Gastrocnemius medialis (tissue), 4 donors: ENCODE measurements at regions of chr6 and their contacts with region 1.

Region 1: GRCh38 chr6:35688581-35689322 is at the start of gene FKBP5:
- DNase-seq: peak; percentile 98
- ATAC-seq: peak; percentile 54 to 57
- H3K4me3 ChIP-seq: peak within 1 kb of the TSS; percentile 79 to 88 (median 84)
- H3K27ac ChIP-seq: peak within 1 kb of the TSS; percentile 96 to 98 (median 97)
- H3K4me1 ChIP-seq: peaks cover 38 to 41% of the 10 kb centered on the region in 2 donors
- H3K27me3 ChIP-seq: no peaks in the 10 kb centered on the region
- CTCF ChIP-seq: peak in 1 of 5 experiments; percentile 21
- POLR2A ChIP-seq: peak; percentile 100
- total RNA-seq, gene FKBP5: 665 to 1,753 (median 1,205) TPM

Region 2: DNA sequence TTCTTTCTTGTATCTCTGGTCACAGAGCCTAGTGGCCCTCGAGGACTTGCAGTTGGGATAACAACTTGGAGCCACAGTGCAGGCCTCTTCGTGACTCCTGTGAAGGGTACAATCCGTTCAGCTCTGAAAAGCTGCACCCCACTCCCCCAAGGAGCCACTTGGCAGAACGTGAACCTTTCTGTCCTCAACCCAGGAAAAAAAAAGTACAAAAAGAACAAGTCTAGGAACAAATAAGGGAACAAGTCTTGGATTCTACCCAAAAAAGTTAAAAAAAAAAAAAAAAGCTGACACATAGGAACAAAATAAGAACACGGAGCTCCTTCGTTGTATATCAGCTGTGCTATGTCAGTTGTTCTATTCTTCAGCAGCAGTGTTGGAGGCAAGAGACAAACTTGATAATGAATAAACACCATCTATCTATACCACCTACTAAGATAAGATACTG is 98.1 kb before region 1 on chr6:
- in situ Hi-C with region 1: no loop called
- intact Hi-C with region 1: loop called (anchors 1 kb)
- DNase-seq: peak; percentile 80 to 85
- ATAC-seq: peak; percentile 63 to 70
- H3K4me3 ChIP-seq: no peak overlapping the region
- H3K27ac ChIP-seq: peak overlapping the region; percentile 89 to 99 (median 92)
- H3K4me1 ChIP-seq: peaks cover 89 to 97% of the 10 kb centered on the region in 2 donors
- H3K27me3 ChIP-seq: no peaks in the 10 kb centered on the region
- CTCF ChIP-seq: no peak
- POLR2A ChIP-seq: peak; percentile 36 to 73

Region 3: DNA sequence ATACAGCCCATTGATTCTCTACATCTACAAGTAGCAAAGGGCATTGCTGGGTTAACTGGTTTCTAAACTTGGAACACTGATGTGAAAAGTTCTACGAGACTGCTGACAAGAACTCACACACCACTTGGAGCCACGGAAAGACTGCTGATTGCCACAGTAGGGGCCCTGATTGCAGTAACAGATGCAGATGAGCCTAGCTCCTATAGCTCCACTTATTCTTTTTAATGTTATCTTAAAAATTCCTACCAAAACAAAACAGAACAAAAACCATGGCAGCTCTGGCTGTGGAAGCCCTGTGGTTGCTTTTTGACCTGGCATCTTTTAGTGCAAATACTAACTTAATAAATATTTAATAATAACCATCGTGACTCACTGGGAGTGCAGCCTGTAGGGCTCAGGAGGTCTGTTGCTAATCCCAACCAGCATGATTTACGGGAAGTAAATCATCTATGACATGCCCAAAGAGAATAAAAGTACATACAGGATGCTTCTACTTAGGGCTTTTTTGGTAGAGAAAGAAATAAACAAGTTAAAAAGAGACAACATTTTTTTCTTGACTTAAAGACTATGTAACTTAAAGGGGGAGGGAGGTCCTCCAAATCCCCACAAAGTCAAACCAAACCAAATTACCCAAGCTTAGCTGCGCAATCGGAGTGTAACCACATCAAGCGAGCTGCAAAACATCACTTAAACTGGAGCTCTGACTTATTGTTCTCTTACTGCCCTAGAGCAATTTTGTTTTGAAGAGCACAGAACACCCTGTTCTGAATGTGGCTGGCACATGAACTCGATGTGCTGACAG is 87.2 kb before region 1 on chr6:
- in situ Hi-C with region 1: no loop called
- intact Hi-C with region 1: loop called (anchors 1 kb)
- DNase-seq: peak; percentile 83 to 88
- ATAC-seq: peak; percentile 74 to 75
- H3K4me3 ChIP-seq: peak overlapping the region in 3 of 4 donors; percentile 6 to 27 (median 22)
- H3K27ac ChIP-seq: peak overlapping the region; percentile 89 to 99 (median 92)
- H3K4me1 ChIP-seq: peaks cover 85 to 99% of the 10 kb centered on the region in 2 donors
- H3K27me3 ChIP-seq: no peaks in the 10 kb centered on the region
- CTCF ChIP-seq: no peak
- POLR2A ChIP-seq: peak in 1 of 2 donors; percentile 54

Region 4: DNA sequence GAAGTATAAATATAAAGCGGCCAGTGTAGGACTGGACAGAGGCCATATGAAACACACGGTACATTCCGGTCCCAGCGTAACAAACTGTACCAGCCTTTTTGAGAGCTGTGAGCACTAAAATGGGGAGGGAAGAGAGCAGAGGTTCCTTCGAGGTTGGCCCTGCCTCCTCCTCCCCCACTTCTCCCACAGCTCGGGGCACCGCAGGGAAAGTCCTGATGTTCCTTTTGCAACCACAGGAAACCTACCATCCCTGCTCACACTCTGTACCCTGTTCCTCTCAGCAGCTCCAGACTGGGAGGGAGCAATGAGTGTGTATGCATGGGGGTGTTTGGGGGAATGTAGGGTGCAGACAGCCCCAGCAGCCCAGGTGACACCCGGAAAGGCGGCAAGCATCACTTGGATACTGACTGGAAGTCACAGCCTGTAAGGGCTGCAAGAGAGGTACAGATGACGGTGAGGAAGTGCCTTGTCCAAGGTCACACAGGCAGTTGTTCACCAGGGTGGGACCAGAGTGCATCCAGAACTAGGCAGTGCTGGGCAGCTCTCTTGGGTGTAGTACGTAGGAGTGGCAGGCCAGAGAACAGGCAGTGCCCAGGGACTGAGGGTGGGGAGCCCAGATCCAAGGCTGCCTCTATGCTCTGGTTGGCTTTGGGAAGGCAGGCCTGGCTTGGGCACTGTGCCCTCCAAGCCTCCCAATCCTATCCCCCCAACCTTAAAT is 37.1 kb after region 1 on chr6:
- in situ Hi-C with region 1: loop called in 2 of 4 experiments (anchors 5 kb)
- intact Hi-C with region 1: loop called (anchors 1 kb)
- DNase-seq: peak; percentile 90 to 96
- ATAC-seq: peak; percentile 31 to 33
- H3K4me3 ChIP-seq: peak overlapping the region; percentile 28 to 66 (median 60)
- H3K27ac ChIP-seq: peak overlapping the region; percentile 99 to 100 (median 100)
- H3K4me1 ChIP-seq: peaks cover 86 to 92% of the 10 kb centered on the region in 2 donors
- H3K27me3 ChIP-seq: no peaks in the 10 kb centered on the region
- CTCF ChIP-seq: no peak
- POLR2A ChIP-seq: no peak

Region 5: GRCh38 chr6:35970181-35970580 is 281.4 kb after region 1 on chr6:
- in situ Hi-C with region 1: no loop called
- intact Hi-C with region 1: no loop called
- DNase-seq: no peak
- ATAC-seq: no peak
- H3K4me3 ChIP-seq: no peak overlapping the region
- H3K27ac ChIP-seq: no peak overlapping the region
- H3K4me1 ChIP-seq: no peaks in the 10 kb centered on the region
- H3K27me3 ChIP-seq: no peaks in the 10 kb centered on the region
- CTCF ChIP-seq: no peak
- POLR2A ChIP-seq: no peak